MCF 10A (cell line): ENCODE measurements at regions of chr1 and their contacts with region 1.

Region 1: GRCh38 chr1:27979151-27979858 is 19.5 kb downstream of the XKR8 start:
- DNase-seq: peak; percentile 66
- H3K4me3 Mint-ChIP-seq: no peak overlapping the region
- H3K27ac Mint-ChIP-seq: no peak overlapping the region
- H3K4me1 Mint-ChIP-seq: no peaks in the 10 kb centered on the region
- H3K27me3 Mint-ChIP-seq: no peaks in the 10 kb centered on the region
- CTCF ChIP-seq: peak; percentile 39

Region 2: GRCh38 chr1:27906759-27907158 is 72.5 kb before region 1 on chr1:
- CTCF ChIA-PET with region 1: interaction called, 3 read pairs
- POLR2A ChIA-PET with region 1: no interaction called
- intact Hi-C with region 1: loop called (anchors 2 kb)
- DNase-seq: no peak
- H3K4me3 Mint-ChIP-seq: no peak overlapping the region
- H3K27ac Mint-ChIP-seq: no peak overlapping the region
- H3K4me1 Mint-ChIP-seq: no peaks in the 10 kb centered on the region
- H3K27me3 Mint-ChIP-seq: no peaks in the 10 kb centered on the region
- CTCF ChIP-seq: no peak

Region 3: DNA sequence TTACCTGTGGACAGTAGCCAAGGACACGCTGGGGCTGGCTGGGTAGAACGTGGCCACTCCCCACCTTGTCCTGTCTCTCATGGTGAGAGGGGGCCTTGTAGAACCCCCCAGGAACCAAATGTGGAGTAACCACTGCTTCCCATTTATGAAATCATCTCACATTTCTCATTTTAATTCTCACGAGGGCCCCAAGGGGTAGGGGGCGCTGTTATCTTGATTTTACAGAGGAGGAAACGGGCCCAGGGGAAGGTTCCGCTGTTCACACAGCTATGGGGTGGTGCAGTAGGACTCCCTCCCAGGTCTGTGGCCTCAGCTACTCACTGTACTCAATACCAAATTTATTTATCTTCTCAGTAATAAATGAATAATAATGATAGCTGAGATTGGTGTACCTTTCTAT is 39.0 kb before region 1 on chr1:
- CTCF ChIA-PET with region 1: interaction called, 3 read pairs
- POLR2A ChIA-PET with region 1: no interaction called
- intact Hi-C with region 1: loop called (anchors 1 kb)
- DNase-seq: peak; percentile 46
- H3K4me3 Mint-ChIP-seq: no peak overlapping the region
- H3K27ac Mint-ChIP-seq: no peak overlapping the region
- H3K4me1 Mint-ChIP-seq: peaks cover 7% of the 10 kb centered on the region
- H3K27me3 Mint-ChIP-seq: no peaks in the 10 kb centered on the region
- CTCF ChIP-seq: no peak

Region 4: GRCh38 chr1:27959400-27960217 is 19.7 kb before region 1 on chr1 and contains the start of gene XKR8:
- CTCF ChIA-PET with region 1: interaction called, 3 read pairs
- POLR2A ChIA-PET with region 1: interaction called, 9 read pairs
- intact Hi-C with region 1: loop called (anchors 1 kb)
- DNase-seq: peak; percentile 89
- H3K4me3 Mint-ChIP-seq: peak within 1 kb of the TSS; percentile 79
- H3K27ac Mint-ChIP-seq: peak within 1 kb of the TSS; percentile 93
- H3K4me1 Mint-ChIP-seq: peaks cover 15% of the 10 kb centered on the region
- H3K27me3 Mint-ChIP-seq: no peaks in the 10 kb centered on the region
- CTCF ChIP-seq: peak; percentile 38
- total RNA-seq, gene XKR8: 2.8 and 4.0 TPM in 2 replicates

Region 5: GRCh38 chr1:27990920-27991537 is 11.7 kb after region 1 on chr1:
- CTCF ChIA-PET with region 1: interaction called, 12 read pairs
- POLR2A ChIA-PET with region 1: no interaction called
- intact Hi-C with region 1: no loop called
- DNase-seq: no peak
- H3K4me3 Mint-ChIP-seq: no peak overlapping the region
- H3K27ac Mint-ChIP-seq: peak overlapping the region; percentile 28
- H3K4me1 Mint-ChIP-seq: no peaks in the 10 kb centered on the region
- H3K27me3 Mint-ChIP-seq: no peaks in the 10 kb centered on the region
- CTCF ChIP-seq: no peak

Region 6: GRCh38 chr1:28058971-28059878 is 79.9 kb after region 1 on chr1:
- CTCF ChIA-PET with region 1: no interaction called
- POLR2A ChIA-PET with region 1: no interaction called
- intact Hi-C with region 1: no loop called
- DNase-seq: no peak
- H3K4me3 Mint-ChIP-seq: peak overlapping the region; percentile 23
- H3K27ac Mint-ChIP-seq: no peak overlapping the region
- H3K4me1 Mint-ChIP-seq: peaks cover 6% of the 10 kb centered on the region
- H3K27me3 Mint-ChIP-seq: no peaks in the 10 kb centered on the region
- CTCF ChIP-seq: no peak